ENCODE measurements at regions of chr4 and their contacts with region 1.

Region 1: GRCh38 chr4:112938461-112939058 is 110.9 kb upstream of the ANK2 start:
- DNase-seq: no peak
- ATAC-seq: peak; percentile 57; the same call in 1 of the 2 replicates
- H3K4me3 Mint-ChIP-seq: no peak overlapping the region
- H3K27ac Mint-ChIP-seq: no peak overlapping the region
- H3K4me1 Mint-ChIP-seq: peaks cover 16% of the 10 kb centered on the region
- H3K27me3 Mint-ChIP-seq: no peaks in the 10 kb centered on the region
- CTCF ChIP-seq: no peak

Region 2: DNA sequence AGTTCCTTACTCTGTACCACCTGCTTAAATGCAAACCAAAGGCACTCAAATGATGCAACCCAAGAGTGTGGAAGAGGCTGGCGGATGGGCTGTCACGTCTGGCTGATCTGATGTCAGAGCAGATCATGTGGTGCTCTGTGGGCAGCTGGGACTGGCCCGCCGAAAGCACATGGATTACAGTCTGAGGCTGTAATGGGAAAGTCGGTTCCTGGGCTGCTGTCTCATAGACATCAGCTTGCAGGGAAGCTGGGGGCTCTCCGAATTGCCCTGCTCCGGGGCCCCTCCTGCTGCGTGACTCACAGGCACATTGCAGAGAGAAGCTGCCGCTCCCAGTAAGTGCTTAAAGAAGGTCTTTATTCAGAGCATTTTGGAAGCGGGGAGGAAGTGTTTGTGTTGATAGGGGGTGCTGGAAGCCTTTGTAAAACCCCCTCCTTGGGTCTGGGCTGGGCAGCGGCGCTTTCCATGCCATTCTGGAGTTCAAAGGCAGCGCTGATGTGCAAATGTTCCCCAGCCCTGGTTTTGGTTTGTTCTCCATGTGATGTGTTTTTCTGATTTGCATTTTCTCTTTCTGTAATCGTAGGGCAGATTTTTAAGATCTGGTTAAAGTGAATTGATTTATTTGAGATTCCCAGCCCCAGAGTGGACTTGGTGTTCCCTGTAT is 120.5 kb before region 1 on chr4:
- CTCF ChIA-PET with region 1: interaction called, 10 read pairs
- POLR2A ChIA-PET with region 1: no interaction called
- DNase-seq: peak; percentile 81
- ATAC-seq: peak; percentile 96
- H3K4me3 Mint-ChIP-seq: peak overlapping the region; percentile 58
- H3K27ac Mint-ChIP-seq: peak overlapping the region; percentile 71
- H3K4me1 Mint-ChIP-seq: peaks cover 21% of the 10 kb centered on the region
- H3K27me3 Mint-ChIP-seq: no peaks in the 10 kb centered on the region
- CTCF ChIP-seq: no peak

Region 3: GRCh38 chr4:112853662-112854256 is 84.8 kb before region 1 on chr4:
- CTCF ChIA-PET with region 1: interaction called, 10 read pairs
- POLR2A ChIA-PET with region 1: interaction called, 3 read pairs
- DNase-seq: no peak
- ATAC-seq: no peak
- H3K4me3 Mint-ChIP-seq: no peak overlapping the region
- H3K27ac Mint-ChIP-seq: peak overlapping the region; percentile 11; the same call in 1 of the 2 replicates
- H3K4me1 Mint-ChIP-seq: peaks cover 36% of the 10 kb centered on the region
- H3K27me3 Mint-ChIP-seq: no peaks in the 10 kb centered on the region
- CTCF ChIP-seq: no peak; the same call in 1 of the 2 replicates

Region 4: DNA sequence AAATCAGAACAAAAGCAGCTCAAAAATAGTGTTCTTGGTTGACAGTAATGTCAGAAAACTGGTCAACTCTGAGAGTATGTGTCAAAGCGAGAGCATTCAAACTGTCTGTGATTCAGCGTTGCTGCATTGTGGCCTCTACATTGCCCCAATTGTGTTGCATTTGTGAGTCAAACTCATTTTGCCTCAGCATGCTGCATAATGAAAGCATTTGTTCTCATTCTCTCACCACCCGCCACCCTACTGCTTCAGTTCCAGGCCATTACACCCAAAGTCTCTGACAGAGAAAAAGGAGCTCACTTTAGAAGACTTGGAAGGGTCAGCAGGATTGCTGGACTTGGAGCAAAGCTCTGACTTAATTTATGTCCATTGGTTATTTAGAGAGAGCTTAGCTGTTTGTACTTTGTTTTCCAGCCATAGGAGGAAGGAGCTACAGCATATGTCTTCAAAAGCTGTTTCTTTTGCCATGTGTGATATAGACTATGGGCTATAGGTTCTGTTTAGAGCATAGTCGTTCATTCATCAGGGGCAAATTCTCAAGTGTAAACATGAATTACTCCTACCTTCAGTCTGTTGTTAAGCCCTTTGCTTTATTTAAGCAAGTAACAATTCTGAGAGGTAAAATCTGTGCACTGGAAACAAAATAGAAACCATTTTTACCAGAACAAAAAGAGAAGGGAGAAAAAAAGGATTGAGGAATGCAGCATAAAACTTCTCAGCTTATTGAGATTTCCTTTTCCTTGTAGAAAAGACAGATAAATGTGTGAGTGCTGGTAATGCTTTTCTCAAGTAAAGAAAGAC is 42.5 kb before region 1 on chr4:
- CTCF ChIA-PET with region 1: interaction called, 15 read pairs
- POLR2A ChIA-PET with region 1: interaction called, 3 read pairs
- DNase-seq: peak; percentile 18
- ATAC-seq: peak; percentile 86
- H3K4me3 Mint-ChIP-seq: peak overlapping the region; percentile 30; the same call in 1 of the 2 replicates
- H3K27ac Mint-ChIP-seq: peak overlapping the region; percentile 93
- H3K4me1 Mint-ChIP-seq: peaks cover 68% of the 10 kb centered on the region
- H3K27me3 Mint-ChIP-seq: no peaks in the 10 kb centered on the region
- CTCF ChIP-seq: no peak

Region 5: GRCh38 chr4:112927544-112927943 is 11.0 kb before region 1 on chr4:
- CTCF ChIA-PET with region 1: interaction called, 10 read pairs
- POLR2A ChIA-PET with region 1: no interaction called
- DNase-seq: no peak
- ATAC-seq: no peak
- H3K4me3 Mint-ChIP-seq: no peak overlapping the region
- H3K27ac Mint-ChIP-seq: no peak overlapping the region
- H3K4me1 Mint-ChIP-seq: no peaks in the 10 kb centered on the region
- H3K27me3 Mint-ChIP-seq: no peaks in the 10 kb centered on the region
- CTCF ChIP-seq: no peak

Region 6: GRCh38 chr4:112951362-112952312 is 13.1 kb after region 1 on chr4:
- CTCF ChIA-PET with region 1: interaction called, 11 read pairs
- POLR2A ChIA-PET with region 1: no interaction called
- DNase-seq: no peak
- ATAC-seq: no peak
- H3K4me3 Mint-ChIP-seq: no peak overlapping the region
- H3K27ac Mint-ChIP-seq: no peak overlapping the region
- H3K4me1 Mint-ChIP-seq: peaks cover 4% of the 10 kb centered on the region; the same call in 1 of the 2 replicates
- H3K27me3 Mint-ChIP-seq: no peaks in the 10 kb centered on the region
- CTCF ChIP-seq: peak; percentile 32; the same call in 1 of the 2 replicates